Activated CD8-positive, alpha-beta T cell treated with anti-CD3 and anti-CD28 coated beads, Interleukin-2, amount 10 ng/mL, durations not matched to agents 7 days and 5 days (primary cell): ENCODE measurements at regions of chr2 and their contacts with region 1.

Region 1: GRCh38 chr2:223993621-223994232 is 36.5 kb downstream of the MRPL44 start:
- DNase-seq: peak; percentile 78
- ATAC-seq: peak; percentile 81
- H3K4me3 Mint-ChIP-seq: no peak overlapping the region
- H3K27ac Mint-ChIP-seq: no peak overlapping the region
- H3K4me1 Mint-ChIP-seq: peaks cover 8% of the 10 kb centered on the region
- H3K27me3 Mint-ChIP-seq: no peaks in the 10 kb centered on the region

Region 2: DNA sequence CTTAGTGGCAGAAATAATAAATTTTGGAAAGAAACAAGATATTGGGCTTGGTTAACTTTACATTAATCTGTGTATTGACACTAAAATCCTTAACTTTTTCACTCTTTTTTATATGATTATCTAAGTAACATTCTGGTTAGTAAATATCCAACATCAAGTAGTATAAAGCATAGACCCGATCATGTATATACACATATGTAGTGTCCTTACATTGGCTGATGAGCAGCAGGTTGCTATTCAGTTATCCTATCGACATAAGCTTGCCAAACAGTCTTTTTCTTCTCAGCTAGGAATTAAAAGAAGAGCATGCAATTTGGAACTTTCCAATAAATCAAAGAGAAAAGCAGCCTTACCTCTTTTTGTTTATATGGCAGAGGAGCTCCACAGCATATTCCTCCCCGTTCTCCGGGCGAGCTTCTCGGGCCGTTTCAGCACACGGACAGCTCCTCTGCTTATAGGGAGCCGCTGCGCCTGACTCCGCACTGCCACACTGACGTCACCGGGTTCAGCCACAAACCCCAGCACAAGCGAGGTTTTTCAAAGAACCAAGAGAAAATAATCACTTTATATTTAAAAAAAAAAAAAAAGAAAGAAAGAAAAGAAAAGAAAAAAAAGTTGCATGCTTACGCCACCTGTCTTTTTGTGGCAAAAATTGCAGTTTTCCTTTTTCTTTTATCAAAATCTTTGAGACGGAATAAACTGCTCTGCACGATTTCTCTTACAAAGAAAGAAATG is 391.6 kb before region 1 on chr2 and contains the start of gene SCG2:
- CTCF ChIA-PET with region 1: no interaction called
- POLR2A ChIA-PET with region 1: no interaction called
- DNase-seq: peak; percentile 76
- ATAC-seq: peak; percentile 94
- H3K4me3 Mint-ChIP-seq: no peak within 1 kb of the TSS
- H3K27ac Mint-ChIP-seq: no peak within 1 kb of the TSS
- H3K4me1 Mint-ChIP-seq: peaks cover 3% of the 10 kb centered on the region
- H3K27me3 Mint-ChIP-seq: no peaks in the 10 kb centered on the region
- total RNA-seq, gene SCG2: not detected

Region 3: GRCh38 chr2:223970343-223971128 is 23.2 kb before region 1 on chr2:
- CTCF ChIA-PET with region 1: interaction called, 76 read pairs
- POLR2A ChIA-PET with region 1: no interaction called
- DNase-seq: peak; percentile 76
- ATAC-seq: peak; percentile 83
- H3K4me3 Mint-ChIP-seq: no peak overlapping the region
- H3K27ac Mint-ChIP-seq: no peak overlapping the region
- H3K4me1 Mint-ChIP-seq: peaks cover 6% of the 10 kb centered on the region
- H3K27me3 Mint-ChIP-seq: no peaks in the 10 kb centered on the region

Region 4: GRCh38 chr2:224004105-224004695 is 10.5 kb after region 1 on chr2:
- CTCF ChIA-PET with region 1: interaction called, 31 read pairs
- POLR2A ChIA-PET with region 1: no interaction called
- DNase-seq: no peak
- ATAC-seq: no peak
- H3K4me3 Mint-ChIP-seq: no peak overlapping the region
- H3K27ac Mint-ChIP-seq: no peak overlapping the region
- H3K4me1 Mint-ChIP-seq: no peaks in the 10 kb centered on the region
- H3K27me3 Mint-ChIP-seq: no peaks in the 10 kb centered on the region

Region 5: GRCh38 chr2:224025874-224026273 is 32.1 kb after region 1 on chr2:
- CTCF ChIA-PET with region 1: interaction called, 15 read pairs
- POLR2A ChIA-PET with region 1: no interaction called
- DNase-seq: peak; percentile 88
- ATAC-seq: peak; percentile 96
- H3K4me3 Mint-ChIP-seq: peak overlapping the region; percentile 45
- H3K27ac Mint-ChIP-seq: peak overlapping the region; percentile 97
- H3K4me1 Mint-ChIP-seq: peaks cover 60% of the 10 kb centered on the region
- H3K27me3 Mint-ChIP-seq: no peaks in the 10 kb centered on the region

Region 6: DNA sequence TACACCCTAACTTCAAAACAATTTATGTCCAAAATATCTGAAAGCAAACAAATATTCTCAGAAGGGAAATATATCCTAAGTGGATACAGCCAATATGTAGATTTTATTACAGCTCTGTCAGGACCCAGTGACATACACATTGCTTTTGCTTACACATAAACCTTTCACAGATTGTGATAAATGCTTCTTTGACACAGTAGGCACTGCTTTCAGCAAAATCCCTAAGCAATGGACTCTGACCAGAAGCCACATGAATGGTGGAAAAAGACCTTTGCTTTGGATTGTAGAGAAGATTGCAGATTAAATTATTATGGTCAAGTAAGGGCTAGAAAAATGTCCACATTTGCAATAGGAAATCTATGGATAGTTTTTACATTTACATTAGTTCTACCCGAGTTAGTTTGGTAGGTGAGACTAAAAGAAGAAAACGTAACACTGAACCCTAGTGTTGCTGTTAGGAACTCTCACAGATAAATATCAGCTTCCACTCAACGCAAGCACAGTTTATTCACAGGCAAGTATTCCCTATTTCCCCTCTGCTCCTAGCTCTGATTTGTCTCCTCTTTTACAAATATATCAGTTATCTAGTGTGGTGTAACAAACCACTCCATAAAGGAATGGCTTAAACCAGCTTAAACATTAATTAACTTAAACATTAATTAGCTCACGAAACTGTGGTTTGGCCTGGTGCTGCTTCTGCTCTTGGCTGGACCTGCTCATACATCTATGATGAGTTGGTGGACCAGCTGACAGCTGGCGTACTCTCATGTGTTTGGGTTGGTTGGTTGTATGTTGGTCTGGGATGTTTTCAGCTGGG is 69.0 kb after region 1 on chr2:
- CTCF ChIA-PET with region 1: interaction called, 61 read pairs
- POLR2A ChIA-PET with region 1: no interaction called
- DNase-seq: no peak
- ATAC-seq: no peak
- H3K4me3 Mint-ChIP-seq: no peak overlapping the region
- H3K27ac Mint-ChIP-seq: no peak overlapping the region
- H3K4me1 Mint-ChIP-seq: no peaks in the 10 kb centered on the region
- H3K27me3 Mint-ChIP-seq: peaks cover 11% of the 10 kb centered on the region

Region 7: GRCh38 chr2:224284134-224284946 is 290.6 kb after region 1 on chr2:
- CTCF ChIA-PET with region 1: interaction called, 130 read pairs
- POLR2A ChIA-PET with region 1: interaction called, 3 read pairs
- DNase-seq: peak; percentile 36
- ATAC-seq: no peak
- H3K4me3 Mint-ChIP-seq: no peak overlapping the region
- H3K27ac Mint-ChIP-seq: no peak overlapping the region
- H3K4me1 Mint-ChIP-seq: no peaks in the 10 kb centered on the region
- H3K27me3 Mint-ChIP-seq: peaks cover 35% of the 10 kb centered on the region